Gastrocnemius medialis (tissue), 4 donors: ENCODE measurements at regions of chr5 and their contacts with region 1.

Region 1: DNA sequence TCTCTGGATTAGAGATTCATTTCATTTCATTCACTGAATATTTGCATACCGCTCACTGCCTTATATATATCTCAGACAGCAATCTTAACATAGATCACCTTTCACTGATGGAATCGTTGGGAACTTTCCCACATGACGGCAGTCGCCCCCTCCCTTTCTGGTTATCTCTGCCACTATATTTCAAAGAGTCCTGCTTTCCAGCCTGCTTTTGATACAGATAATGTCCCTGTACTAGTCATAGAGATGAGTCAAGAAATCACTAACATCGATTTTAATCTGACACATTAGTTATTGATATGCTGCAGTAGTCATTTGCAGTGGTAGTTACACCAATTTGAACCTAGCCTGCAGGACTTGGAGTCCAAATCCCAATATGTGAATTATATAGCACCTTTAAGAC is 8.5 kb downstream of the ARSK start:
- DNase-seq: no peak
- ATAC-seq: no peak
- H3K4me3 ChIP-seq: no peak overlapping the region
- H3K27ac ChIP-seq: no peak overlapping the region
- H3K4me1 ChIP-seq: no peaks in the 10 kb centered on the region
- H3K27me3 ChIP-seq: no peaks in the 10 kb centered on the region
- CTCF ChIP-seq: no peak
- POLR2A ChIP-seq: no peak

Region 2: GRCh38 chr5:95543017-95543705 is 20.2 kb before region 1 on chr5:
- in situ Hi-C with region 1: no loop called
- intact Hi-C with region 1: no loop called
- DNase-seq: no peak
- ATAC-seq: peak; percentile 72 to 95
- H3K4me3 ChIP-seq: no peak overlapping the region
- H3K27ac ChIP-seq: peak overlapping the region; percentile 43 to 76 (median 59)
- H3K4me1 ChIP-seq: peaks cover 14 to 18% of the 10 kb centered on the region in 2 donors
- H3K27me3 ChIP-seq: no peaks in the 10 kb centered on the region
- CTCF ChIP-seq: no peak
- POLR2A ChIP-seq: no peak

Region 3: GRCh38 chr5:95600557-95600956 is 37.2 kb after region 1 on chr5:
- in situ Hi-C with region 1: no loop called
- intact Hi-C with region 1: loop called (anchors 1 kb)
- DNase-seq: no peak
- ATAC-seq: no peak
- H3K4me3 ChIP-seq: no peak overlapping the region
- H3K27ac ChIP-seq: no peak overlapping the region
- H3K4me1 ChIP-seq: peaks cover 5 to 7% of the 10 kb centered on the region in 2 donors
- H3K27me3 ChIP-seq: no peaks in the 10 kb centered on the region
- CTCF ChIP-seq: no peak
- POLR2A ChIP-seq: no peak

Region 4: DNA sequence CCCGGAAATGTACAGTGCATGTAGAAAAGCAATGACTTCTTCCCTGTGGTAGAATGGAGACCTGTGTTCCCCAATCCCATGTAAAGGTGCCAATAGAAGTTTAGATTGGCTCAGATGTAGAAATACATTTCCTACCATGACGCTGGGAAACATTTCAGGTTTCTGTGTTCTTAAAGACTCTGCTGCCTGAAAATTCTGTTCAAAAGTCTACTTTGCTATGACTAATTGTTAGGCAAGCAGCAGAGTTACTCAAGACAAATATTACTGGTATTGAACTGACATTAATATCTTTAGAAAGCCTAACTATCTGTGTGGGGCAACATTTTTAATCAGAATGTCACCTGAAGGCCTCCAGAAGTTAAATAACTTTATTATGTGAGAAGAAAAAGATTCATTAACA is 473.8 kb after region 1 on chr5:
- in situ Hi-C with region 1: no loop called
- intact Hi-C with region 1: no loop called
- DNase-seq: no peak
- ATAC-seq: no peak
- H3K4me3 ChIP-seq: no peak overlapping the region
- H3K27ac ChIP-seq: no peak overlapping the region
- H3K4me1 ChIP-seq: no peaks in the 10 kb centered on the region
- H3K27me3 ChIP-seq: no peaks in the 10 kb centered on the region
- CTCF ChIP-seq: no peak
- POLR2A ChIP-seq: no peak